ENCODE measurements at regions of chr6 and their contacts with region 1.

Region 1: DNA sequence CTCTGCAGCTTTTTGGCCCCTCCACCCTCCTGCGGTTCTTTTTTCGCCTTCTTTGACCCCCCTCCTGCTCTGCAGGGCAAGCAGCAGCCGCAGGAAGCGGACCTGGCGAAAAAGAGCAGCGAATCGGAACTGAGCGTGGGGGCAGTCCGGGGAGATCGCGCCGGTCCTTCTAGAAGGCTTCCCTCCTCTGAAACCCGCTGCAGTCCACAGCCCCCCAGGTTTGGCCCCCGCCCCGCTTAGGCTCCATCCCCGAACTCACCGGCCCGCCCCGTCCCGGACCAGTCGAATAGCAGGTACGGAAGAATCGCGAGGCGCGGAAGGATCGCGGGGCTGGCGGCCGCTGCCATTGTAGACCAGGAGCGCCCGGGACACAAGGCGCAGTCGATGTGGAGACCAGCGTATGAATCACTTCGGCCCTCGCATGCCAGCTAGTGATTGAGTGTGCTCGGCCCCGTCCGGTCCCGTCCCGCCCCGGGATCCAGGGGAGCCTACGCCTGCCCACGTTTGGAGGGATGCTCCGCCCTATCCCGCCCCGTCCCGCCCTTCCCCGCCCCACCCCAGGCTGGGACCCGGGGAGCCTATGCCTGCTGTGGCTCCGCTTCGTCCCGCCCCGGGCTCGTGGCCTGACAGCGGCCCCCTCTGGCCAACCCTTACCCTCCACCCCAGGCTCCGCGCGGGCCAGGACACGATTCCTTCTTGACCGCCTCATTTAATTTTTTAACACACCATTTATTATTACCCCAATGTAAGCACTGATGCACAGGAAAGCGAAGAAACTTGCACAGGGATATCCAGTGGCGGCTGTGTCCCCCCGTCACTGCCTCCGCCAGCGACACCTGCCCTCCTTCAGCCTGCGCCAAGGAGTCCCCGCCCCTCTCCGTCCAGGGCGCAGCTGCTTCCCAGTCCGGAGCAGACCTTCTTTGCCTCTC is at the start of gene ULBP3:
- DNase-seq: peak; percentile 88
- ATAC-seq: peak; percentile 85
- H3K4me3 Mint-ChIP-seq: peak within 1 kb of the TSS; percentile 60
- H3K27ac Mint-ChIP-seq: no peak within 1 kb of the TSS
- H3K4me1 Mint-ChIP-seq: peaks cover 9% of the 10 kb centered on the region
- H3K27me3 Mint-ChIP-seq: peaks cover 14% of the 10 kb centered on the region
- total RNA-seq, gene ULBP3: 0.46 to 0.77 TPM

Region 2: DNA sequence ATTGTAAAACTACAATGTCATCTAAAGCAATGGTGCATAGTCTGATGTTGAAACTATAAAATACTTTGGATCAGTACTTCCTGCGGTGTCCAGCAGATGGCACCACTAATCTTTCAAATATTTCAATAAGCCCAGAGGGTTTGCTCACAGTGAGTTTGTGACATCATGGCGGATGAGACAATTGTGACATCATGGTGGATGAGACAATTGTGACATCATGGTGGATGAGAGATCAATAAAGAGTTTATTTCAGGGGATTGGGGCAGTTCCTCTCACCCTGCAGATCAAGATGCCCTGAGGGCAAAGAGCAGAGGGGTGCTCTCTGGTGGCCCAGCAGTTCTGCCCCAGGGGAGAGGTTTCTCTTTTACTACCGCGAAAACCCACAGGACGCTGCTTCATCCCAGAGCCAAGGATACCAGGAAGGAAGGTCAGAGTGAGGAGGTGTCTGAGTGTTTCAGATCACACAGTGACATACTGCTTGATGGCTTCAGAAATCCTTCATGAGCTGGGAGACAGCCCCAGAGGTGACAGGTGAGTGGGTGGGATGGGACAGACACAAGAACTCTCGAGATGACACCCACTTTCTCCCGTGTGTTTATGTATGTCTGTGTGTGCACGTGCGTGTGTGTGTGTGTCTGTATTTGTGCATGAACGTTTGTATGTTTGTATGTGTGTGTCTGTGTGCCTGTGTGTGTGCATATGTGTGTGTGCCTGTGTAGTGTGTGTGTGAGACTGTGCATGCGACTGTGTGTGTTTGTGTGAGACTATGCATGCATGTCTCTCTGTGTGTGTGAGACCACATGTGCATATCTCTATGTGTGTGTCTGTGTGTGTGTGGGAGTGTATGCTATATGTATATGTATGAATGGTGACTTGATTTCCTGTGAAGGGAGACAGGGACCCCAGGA is 134.5 kb before region 1 on chr6:
- CTCF ChIA-PET with region 1: no interaction called
- POLR2A ChIA-PET with region 1: no interaction called
- intact Hi-C with region 1: loop called in 1 of 2 experiments (anchors 1 kb)
- DNase-seq: peak; percentile 84
- ATAC-seq: peak; percentile 57
- H3K4me3 Mint-ChIP-seq: no peak overlapping the region
- H3K27ac Mint-ChIP-seq: no peak overlapping the region
- H3K4me1 Mint-ChIP-seq: peaks cover 21% of the 10 kb centered on the region
- H3K27me3 Mint-ChIP-seq: peaks cover 74% of the 10 kb centered on the region

Region 3: GRCh38 chr6:150056156-150056555 is 12.8 kb before region 1 on chr6:
- CTCF ChIA-PET with region 1: interaction called, 12 read pairs
- POLR2A ChIA-PET with region 1: no interaction called
- intact Hi-C with region 1: no loop called
- DNase-seq: no peak
- ATAC-seq: no peak
- H3K4me3 Mint-ChIP-seq: no peak overlapping the region
- H3K27ac Mint-ChIP-seq: no peak overlapping the region
- H3K4me1 Mint-ChIP-seq: peaks cover 8% of the 10 kb centered on the region
- H3K27me3 Mint-ChIP-seq: peaks cover 46% of the 10 kb centered on the region

Region 4: DNA sequence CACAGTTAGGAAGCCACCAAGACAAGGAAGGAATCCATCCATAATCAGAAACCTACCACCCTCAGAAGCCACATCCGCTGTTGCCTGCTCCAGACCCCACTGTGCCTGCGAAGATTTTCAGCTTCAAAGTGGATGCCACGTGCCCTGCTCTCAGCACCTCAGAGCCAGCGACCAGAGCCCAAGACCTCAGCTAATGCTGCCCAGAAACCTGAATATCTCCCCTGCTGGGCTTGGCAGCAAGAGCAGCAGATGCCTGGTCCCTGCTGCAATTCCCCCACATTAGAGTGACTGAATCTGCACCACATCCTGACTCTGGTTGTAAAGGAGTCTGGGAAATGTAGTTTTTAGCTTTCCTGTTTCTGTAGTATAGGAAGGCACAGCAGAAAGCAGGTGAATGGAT is 10.6 kb after region 1 on chr6:
- CTCF ChIA-PET with region 1: interaction called, 24 read pairs
- POLR2A ChIA-PET with region 1: no interaction called
- intact Hi-C with region 1: no loop called
- DNase-seq: peak; percentile 18
- ATAC-seq: peak; percentile 70
- H3K4me3 Mint-ChIP-seq: no peak overlapping the region
- H3K27ac Mint-ChIP-seq: no peak overlapping the region
- H3K4me1 Mint-ChIP-seq: peaks cover 22% of the 10 kb centered on the region
- H3K27me3 Mint-ChIP-seq: peaks cover 22% of the 10 kb centered on the region

Region 5: DNA sequence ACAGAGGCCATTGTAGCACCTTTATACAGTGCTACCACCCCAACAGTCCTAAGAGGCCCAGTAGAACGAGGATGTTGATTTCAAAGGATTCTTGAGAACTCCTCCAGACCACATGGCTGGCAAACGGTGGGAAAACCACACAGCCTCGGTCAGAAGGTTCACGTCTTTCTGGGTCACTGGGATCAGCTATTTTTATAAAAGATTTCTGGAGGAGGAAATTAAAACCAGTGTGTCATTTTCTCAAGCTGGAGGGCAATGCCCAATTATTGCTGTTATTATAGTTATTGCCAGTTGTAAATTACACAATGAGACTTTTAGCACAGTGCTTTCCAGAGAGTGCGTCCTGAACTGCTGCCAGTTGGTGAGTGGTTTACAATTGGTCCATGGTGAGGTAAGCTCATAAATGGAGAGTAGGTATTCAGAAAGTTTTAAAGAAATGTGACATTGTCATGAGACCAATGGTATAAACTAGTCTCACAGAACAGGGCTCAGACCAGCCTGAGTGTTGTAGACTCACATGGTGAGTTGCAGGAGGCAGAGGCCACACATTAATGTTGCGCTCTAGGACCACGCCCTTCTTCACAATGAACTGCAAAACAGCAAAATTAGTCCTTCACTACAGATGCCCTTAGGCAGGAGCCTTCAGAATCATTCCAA is 65.4 kb after region 1 on chr6:
- CTCF ChIA-PET with region 1: no interaction called
- POLR2A ChIA-PET with region 1: no interaction called
- intact Hi-C with region 1: no loop called
- DNase-seq: no peak
- ATAC-seq: no peak
- H3K4me3 Mint-ChIP-seq: no peak overlapping the region
- H3K27ac Mint-ChIP-seq: no peak overlapping the region
- H3K4me1 Mint-ChIP-seq: peaks cover 4% of the 10 kb centered on the region
- H3K27me3 Mint-ChIP-seq: peaks cover 28% of the 10 kb centered on the region

Region 6: DNA sequence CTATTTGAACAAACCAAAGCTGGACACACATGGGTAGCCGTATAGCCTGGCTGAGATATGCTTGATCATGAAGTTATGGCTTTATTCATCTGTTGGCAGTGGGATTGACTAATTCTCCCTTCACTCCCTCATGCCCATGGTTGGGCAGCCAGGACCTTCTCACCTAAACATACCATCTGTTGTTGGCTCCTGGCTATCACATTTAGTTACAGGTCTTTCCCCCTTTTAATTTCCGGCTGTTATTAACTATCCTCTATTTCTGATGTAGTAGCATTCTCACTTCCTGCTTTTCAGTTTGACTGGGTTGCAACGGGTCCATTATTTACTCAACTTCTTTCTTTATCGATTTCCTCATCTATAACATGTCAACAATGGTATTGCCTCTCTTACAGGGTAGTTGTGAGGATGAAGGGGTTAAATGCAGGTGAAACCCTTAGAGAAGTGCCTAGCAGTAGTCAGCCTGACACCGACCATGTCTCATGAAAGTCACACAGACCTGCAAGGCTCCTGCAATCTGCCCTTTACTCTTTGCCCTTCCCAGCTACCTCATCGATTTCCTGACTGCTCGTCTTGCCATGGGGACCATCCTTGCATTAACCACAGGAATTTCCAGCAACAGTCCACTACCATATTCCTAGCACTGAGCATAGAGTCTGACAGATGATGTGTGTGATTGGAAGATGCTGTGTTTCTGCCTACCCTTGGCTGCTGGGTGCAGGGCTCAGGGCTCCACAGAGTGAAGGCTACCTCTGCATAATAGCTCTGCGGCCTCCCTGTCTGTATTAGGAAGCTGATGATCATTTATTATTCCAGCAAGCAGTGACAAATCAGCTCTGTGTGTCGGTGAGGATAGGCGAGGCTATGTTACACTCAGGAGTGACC is 116.1 kb after region 1 on chr6:
- CTCF ChIA-PET with region 1: no interaction called
- POLR2A ChIA-PET with region 1: no interaction called
- intact Hi-C with region 1: no loop called
- DNase-seq: no peak
- ATAC-seq: no peak
- H3K4me3 Mint-ChIP-seq: no peak overlapping the region
- H3K27ac Mint-ChIP-seq: no peak overlapping the region
- H3K4me1 Mint-ChIP-seq: no peaks in the 10 kb centered on the region
- H3K27me3 Mint-ChIP-seq: peaks cover 10% of the 10 kb centered on the region

Region 7: DNA sequence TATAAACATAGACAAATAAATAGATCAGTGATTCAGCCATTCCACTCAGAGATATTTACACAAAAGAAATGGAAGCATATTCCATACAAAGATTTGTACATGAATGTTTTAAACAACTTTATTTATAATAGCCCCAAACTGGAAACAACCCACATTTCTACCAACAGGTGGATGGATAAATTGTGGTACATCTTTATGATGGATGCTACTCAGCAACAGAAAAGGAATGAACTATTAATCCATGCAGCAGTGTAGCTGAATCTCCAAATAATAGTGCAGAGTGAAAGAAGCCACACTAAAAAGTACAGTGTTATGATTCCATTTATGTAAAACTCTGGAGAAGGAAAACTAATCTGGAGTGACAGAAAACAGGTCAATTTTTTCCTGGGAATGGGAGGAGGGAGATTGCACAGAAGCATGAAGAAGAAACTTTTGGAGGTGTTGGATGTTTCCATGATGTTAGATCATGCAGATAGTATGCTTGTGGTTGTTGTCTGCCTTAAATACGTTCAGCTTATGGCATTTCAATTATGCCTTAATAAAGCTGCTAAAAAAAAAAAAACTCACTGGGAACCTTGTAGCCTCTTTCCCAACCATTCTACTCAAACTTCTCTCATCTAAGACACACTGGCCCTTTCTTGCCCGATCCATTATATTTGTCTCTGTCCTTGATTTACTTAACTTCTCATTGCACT is 174.8 kb after region 1 on chr6:
- CTCF ChIA-PET with region 1: no interaction called
- POLR2A ChIA-PET with region 1: no interaction called
- intact Hi-C with region 1: loop called in 1 of 2 experiments (anchors 10 kb)
- DNase-seq: no peak
- ATAC-seq: no peak
- H3K4me3 Mint-ChIP-seq: no peak overlapping the region
- H3K27ac Mint-ChIP-seq: no peak overlapping the region
- H3K4me1 Mint-ChIP-seq: peaks cover 22% of the 10 kb centered on the region
- H3K27me3 Mint-ChIP-seq: peaks cover 30% of the 10 kb centered on the region

Region 8: DNA sequence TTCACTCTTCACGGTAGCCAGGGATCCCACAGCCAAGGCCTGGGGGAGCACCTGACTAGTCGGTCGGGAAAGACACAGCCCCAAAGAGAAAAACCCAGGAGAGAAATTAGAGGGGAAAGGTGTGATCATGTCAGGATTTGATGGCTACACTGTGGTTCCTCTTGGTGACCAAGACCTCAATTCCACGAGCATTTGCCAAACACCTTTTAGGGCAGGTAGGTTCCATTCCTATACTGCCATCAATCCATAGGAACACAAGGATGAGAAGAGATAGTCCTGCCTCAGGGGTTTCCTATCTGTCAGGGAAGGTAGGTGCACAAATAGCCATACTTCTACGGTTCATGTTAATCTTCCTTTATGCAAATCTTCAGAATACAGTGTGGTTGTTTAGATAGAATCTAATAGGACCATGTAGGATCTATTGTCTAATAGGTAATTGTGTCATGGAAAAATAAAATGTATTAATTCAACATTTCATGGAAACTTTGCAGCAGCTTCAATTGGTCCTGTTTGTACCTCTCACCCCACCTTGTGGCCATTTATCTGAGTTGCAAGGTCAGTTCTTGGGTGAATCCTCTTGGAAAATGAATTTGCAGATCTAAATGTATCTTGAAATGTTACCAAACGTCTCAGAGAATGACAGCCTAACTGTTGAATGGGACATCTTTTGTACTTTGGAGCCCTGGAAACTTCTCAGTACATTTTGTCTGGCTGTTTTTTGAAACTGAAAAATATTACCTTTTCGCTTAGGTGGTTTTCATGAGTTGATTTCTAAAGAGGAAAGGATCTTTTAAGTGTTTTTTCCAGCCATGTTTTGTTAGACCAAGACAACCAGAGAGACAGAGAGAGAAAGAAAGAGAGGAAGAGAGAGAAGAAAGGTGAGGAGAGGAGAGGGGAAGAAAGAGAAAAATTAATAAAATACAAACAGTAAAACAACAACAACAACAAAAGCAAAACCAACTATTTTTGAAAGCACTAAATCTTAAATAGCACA is 266.1 kb after region 1 on chr6:
- CTCF ChIA-PET with region 1: interaction called, 4 read pairs
- POLR2A ChIA-PET with region 1: no interaction called
- intact Hi-C with region 1: loop called in 1 of 2 experiments (anchors 2 kb)
- DNase-seq: peak; percentile 61
- ATAC-seq: no peak
- H3K4me3 Mint-ChIP-seq: no peak overlapping the region
- H3K27ac Mint-ChIP-seq: no peak overlapping the region
- H3K4me1 Mint-ChIP-seq: no peaks in the 10 kb centered on the region
- H3K27me3 Mint-ChIP-seq: peaks cover 11% of the 10 kb centered on the region

Region 9: DNA sequence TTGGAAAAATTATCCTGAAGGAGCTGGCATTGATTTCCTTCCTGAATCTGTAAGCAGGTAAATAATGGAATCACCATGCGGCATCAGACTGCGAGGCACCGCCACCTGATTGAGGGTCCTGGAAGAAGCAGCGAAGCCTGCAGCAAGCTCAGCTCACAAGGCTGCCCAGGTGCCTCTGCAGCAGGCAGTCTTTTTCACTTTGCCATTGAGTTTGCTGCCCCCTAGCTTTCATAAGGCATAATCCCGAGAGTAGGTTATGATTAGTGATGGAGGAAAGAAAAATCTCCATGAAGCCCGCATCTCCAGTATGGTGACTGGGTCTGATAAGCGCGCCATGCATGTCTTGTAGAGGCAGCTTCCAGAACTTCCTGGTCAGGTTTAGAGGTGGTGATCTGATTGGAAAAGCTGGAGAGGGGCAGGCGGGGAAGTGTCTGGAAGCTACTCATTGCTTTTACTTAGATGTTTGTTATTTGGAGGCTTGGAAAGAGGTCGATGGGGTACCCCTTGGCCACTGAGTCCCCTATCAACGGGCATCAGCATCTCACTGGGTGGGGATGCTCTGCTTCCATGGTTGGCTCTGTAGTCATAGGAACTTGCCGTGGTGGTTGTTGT is 326.5 kb after region 1 on chr6:
- CTCF ChIA-PET with region 1: interaction called, 4 read pairs
- POLR2A ChIA-PET with region 1: no interaction called
- intact Hi-C with region 1: loop called in 1 of 2 experiments (anchors 1 kb)
- DNase-seq: peak; percentile 55
- ATAC-seq: peak; percentile 77
- H3K4me3 Mint-ChIP-seq: no peak overlapping the region
- H3K27ac Mint-ChIP-seq: no peak overlapping the region
- H3K4me1 Mint-ChIP-seq: no peaks in the 10 kb centered on the region
- H3K27me3 Mint-ChIP-seq: peaks cover 5% of the 10 kb centered on the region